ENCODE measurements at regions of chr6 and their contacts with region 1.

Region 1: DNA sequence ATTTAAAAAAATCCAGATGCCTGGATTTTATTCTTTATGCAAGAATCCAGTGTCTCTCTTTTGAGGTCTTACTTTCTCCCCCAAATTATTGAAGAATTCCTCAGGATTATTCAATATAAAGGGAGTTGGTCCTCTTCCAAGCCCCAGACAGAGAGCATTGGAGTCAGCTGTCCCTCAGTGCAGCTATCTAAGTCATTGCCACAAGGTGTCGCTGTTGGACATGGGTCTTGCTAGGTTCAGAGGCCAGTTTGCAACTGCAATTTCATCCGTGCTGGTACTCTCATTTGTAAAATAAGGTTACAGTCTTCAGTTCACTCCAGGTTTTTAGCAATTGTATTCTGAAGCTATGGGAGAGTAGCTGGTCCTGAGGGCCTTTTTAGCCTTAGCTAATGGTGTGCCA is 27.8 kb downstream of the CCN2 start:
- DNase-seq: peak in 1 of 2 donors; percentile 32
- ATAC-seq: no peak
- H3K4me3 ChIP-seq: no peak overlapping the region
- H3K27ac ChIP-seq: no peak overlapping the region
- H3K4me1 ChIP-seq: no peaks in the 10 kb centered on the region
- H3K27me3 ChIP-seq: peaks cover 0 to 7% (median 0%) of the 10 kb centered on the region in 7 donors
- CTCF ChIP-seq: peak in 8 of 9 donors; percentile 34 to 67 (median 54)

Region 2: DNA sequence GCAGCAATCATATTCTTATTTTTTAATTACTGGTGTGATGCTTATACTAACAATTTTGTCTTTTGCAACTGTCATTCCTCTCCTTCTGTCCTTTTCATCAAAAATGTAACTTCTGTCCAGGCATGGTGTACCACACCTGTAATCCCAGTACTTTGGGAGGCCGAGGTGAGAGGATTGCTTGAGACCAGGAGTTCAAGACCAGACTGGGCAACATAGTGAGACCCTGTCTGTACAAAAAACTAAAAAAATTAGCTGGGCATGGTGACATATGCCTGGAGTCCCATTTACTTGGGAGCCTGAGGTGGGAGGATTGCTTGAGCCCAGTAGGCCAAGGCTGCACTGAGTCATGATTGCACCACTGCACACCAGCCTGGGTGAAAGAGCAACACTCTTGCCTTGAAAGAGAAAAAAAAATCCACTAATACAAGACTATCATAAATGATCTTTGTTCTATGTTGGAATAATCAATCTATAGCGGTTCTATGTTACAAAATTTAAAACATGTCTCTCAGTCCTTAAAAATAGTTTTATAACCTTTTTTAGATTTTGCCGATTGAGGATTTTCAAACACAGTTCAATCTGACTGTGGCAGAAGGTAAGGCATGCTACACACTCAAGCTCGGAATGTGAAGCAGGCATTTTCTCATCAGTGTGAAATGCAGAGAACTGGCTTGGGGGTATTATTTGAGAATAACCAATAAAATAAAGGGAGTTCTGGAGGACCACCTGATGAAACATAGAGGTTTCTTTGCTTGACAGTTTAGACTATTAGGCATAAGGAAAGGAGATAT is 45.2 kb before region 1 on chr6:
- intact Hi-C with region 1: no loop called
- DNase-seq: no peak
- ATAC-seq: no peak
- H3K4me3 ChIP-seq: no peak overlapping the region
- H3K27ac ChIP-seq: no peak overlapping the region
- H3K4me1 ChIP-seq: no peaks in the 10 kb centered on the region
- H3K27me3 ChIP-seq: no peaks in the 10 kb centered on the region
- CTCF ChIP-seq: no peak

Region 3: DNA sequence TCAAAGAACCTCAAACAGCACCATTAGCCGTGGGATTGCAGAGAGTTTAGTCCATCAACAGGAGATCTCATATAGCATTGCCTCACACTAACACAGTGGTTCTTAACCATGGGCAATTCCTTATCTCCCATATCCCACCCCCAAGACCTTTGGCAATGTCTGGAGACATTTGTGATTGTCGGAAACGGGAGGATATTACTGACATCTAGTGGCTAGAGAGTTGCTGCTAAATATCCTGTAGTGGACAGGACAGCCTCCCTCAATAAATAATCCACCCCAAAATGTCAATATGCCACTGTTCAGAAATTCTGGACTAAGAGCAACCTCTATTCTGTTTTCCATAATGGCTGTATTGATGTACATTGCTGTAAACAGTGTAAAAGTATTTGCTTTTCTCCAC is 237.9 kb after region 1 on chr6:
- intact Hi-C with region 1: loop called (anchors 2 to 10 kb)
- DNase-seq: peak in 1 of 2 donors; percentile 18
- ATAC-seq: peak in 7 of 8 donors; percentile 63 to 80 (median 74)
- H3K4me3 ChIP-seq: no peak overlapping the region
- H3K27ac ChIP-seq: no peak overlapping the region
- H3K4me1 ChIP-seq: peaks cover 0 to 3% (median 0%) of the 10 kb centered on the region in 9 donors
- H3K27me3 ChIP-seq: no peaks in the 10 kb centered on the region
- CTCF ChIP-seq: peak in 8 of 9 donors; percentile 50 to 80 (median 61)

Region 4: GRCh38 chr6:132279592-132280139 is 356.3 kb after region 1 on chr6:
- intact Hi-C with region 1: loop called in 1 of 10 experiments (anchors 10 kb)
- DNase-seq: peak; percentile 63 to 67
- ATAC-seq: peak; percentile 53 to 84 (median 73)
- H3K4me3 ChIP-seq: peak overlapping the region in 7 of 10 donors; percentile 27 to 51 (median 48)
- H3K27ac ChIP-seq: no peak overlapping the region
- H3K4me1 ChIP-seq: no peaks in the 10 kb centered on the region
- H3K27me3 ChIP-seq: peaks cover 0 to 10% (median 7%) of the 10 kb centered on the region in 7 donors
- CTCF ChIP-seq: peak; percentile 78 to 95 (median 91)

Measured in heart right ventricle (tissue), 16 donors.